AG04450 (cell line): ENCODE measurements at regions of chr11 and their contacts with region 1.

Region 1: GRCh38 chr11:6251120-6251733 is 8.4 kb upstream of the CCKBR start:
- DNase-seq: peak; percentile 32
- H3K4me3 ChIP-seq: no peak overlapping the region
- H3K27ac ChIP-seq: no peak overlapping the region
- H3K27me3 ChIP-seq: peaks cover 7% of the 10 kb centered on the region
- CTCF ChIP-seq: peak; percentile 92

Region 2: GRCh38 chr11:6228520-6228919 is 22.7 kb before region 1 on chr11:
- CTCF ChIA-PET with region 1: interaction called, 61 read pairs
- POLR2A ChIA-PET with region 1: no interaction called
- DNase-seq: no peak
- H3K4me3 ChIP-seq: no peak overlapping the region
- H3K27ac ChIP-seq: no peak overlapping the region
- H3K27me3 ChIP-seq: no peaks in the 10 kb centered on the region
- CTCF ChIP-seq: no peak

Region 3: GRCh38 chr11:6240781-6241180 is 10.4 kb before region 1 on chr11:
- CTCF ChIA-PET with region 1: interaction called, 61 read pairs
- POLR2A ChIA-PET with region 1: no interaction called
- DNase-seq: no peak
- H3K4me3 ChIP-seq: no peak overlapping the region
- H3K27ac ChIP-seq: no peak overlapping the region
- H3K27me3 ChIP-seq: peaks cover 17% of the 10 kb centered on the region
- CTCF ChIP-seq: no peak

Region 4: DNA sequence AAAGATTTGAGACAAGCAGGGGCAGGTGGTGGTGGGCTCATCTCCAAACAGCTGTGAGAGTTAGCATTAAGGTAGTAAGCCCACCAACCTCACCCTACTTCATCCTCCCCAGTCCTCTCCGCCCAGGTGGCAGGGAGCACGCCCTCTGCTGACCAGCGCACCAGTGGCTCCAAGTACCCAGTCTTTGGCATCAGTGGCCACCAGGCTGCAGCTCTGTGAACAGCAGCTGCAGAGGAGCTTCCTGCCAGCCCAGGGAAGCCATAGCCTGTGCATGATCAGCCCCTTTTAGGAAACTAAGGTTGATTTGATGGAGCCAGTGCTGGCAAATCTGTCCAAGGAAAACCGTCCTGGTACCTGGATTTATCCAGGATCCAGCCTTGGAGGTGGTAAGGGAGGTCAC is 47.4 kb after region 1 on chr11:
- CTCF ChIA-PET with region 1: interaction called, 39 read pairs
- POLR2A ChIA-PET with region 1: no interaction called
- DNase-seq: no peak
- H3K4me3 ChIP-seq: no peak overlapping the region
- H3K27ac ChIP-seq: no peak overlapping the region
- H3K27me3 ChIP-seq: no peaks in the 10 kb centered on the region
- CTCF ChIP-seq: peak; percentile 53

Region 5: GRCh38 chr11:6315811-6316425 is 64.7 kb after region 1 on chr11:
- CTCF ChIA-PET with region 1: interaction called, 118 read pairs
- POLR2A ChIA-PET with region 1: interaction called, 9 read pairs
- DNase-seq: no peak
- H3K4me3 ChIP-seq: no peak overlapping the region
- H3K27ac ChIP-seq: no peak overlapping the region
- H3K27me3 ChIP-seq: no peaks in the 10 kb centered on the region
- CTCF ChIP-seq: peak; percentile 92

Region 6: DNA sequence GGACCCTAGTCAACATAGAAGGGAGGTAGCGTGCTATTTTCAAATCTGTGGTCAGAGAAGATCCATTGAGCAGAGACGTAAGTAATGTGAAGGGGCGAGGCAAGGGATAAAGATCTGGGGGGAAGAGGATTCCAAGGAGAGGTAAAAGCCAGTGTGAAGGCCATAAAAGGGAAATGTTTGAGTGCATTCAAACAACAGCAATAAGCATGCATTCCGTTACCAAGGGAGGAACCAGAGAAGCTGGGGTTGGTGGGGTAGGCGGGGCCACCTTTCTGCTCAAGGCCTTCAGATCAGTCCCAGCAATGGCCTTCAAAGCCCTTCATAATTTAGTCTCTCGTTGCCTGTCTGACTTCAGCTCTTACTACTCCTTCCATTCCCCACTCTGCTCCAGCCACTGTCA is 120.6 kb after region 1 on chr11:
- CTCF ChIA-PET with region 1: interaction called, 10 read pairs
- POLR2A ChIA-PET with region 1: no interaction called
- DNase-seq: no peak
- H3K4me3 ChIP-seq: no peak overlapping the region
- H3K27ac ChIP-seq: no peak overlapping the region
- H3K27me3 ChIP-seq: peaks cover under 1% of the 10 kb centered on the region
- CTCF ChIP-seq: no peak

Region 7: DNA sequence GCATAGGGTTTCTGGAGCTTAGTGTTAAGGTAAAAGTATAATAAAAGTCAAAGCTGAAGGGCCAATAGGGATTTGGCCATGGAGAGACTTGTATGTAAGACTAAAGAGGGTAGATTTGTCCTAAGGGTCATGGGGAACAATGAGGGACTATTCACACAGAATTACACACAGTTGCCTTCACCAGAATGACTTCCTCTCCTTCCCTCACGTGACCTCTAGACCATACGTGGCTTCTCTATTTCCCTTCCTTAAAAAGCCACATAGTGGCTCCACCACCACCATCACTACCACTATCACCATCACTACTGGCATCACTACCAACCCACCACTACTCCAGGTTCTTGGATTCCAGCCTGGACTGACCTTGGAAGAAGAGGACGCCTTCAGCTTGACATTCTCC is 186.8 kb after region 1 on chr11:
- CTCF ChIA-PET with region 1: no interaction called
- POLR2A ChIA-PET with region 1: no interaction called
- DNase-seq: no peak
- H3K4me3 ChIP-seq: no peak overlapping the region
- H3K27ac ChIP-seq: no peak overlapping the region
- H3K27me3 ChIP-seq: no peaks in the 10 kb centered on the region
- CTCF ChIP-seq: no peak